IMR-90 (cell line): ENCODE measurements at regions of chr11 and their contacts with region 1.

Region 1: GRCh38 chr11:73307323-73308002 is 613 bp upstream of the ARHGEF17 start:
- DNase-seq: peak; percentile 98
- ATAC-seq: peak; percentile 60
- H3K4me3 ChIP-seq: peak overlapping the region; percentile 63
- H3K27ac ChIP-seq: peak overlapping the region; percentile 93
- H3K4me1 ChIP-seq: peaks cover 23% of the 10 kb centered on the region
- H3K27me3 ChIP-seq: no peaks in the 10 kb centered on the region
- CTCF ChIP-seq: peak; percentile 98
- POLR2A ChIP-seq: 0 out of 2 replicates have a peak, but pooled peaks have one; percentile 32
- RAD21 ChIP-seq: peak; percentile 97

Region 2: GRCh38 chr11:73257342-73258103 is 49.9 kb before region 1 on chr11:
- CTCF ChIA-PET with region 1: interaction called, 4 read pairs
- POLR2A ChIA-PET with region 1: interaction called, 11 read pairs
- dilution Hi-C with region 1: no loop called
- in situ Hi-C with region 1: no loop called
- intact Hi-C with region 1: no loop called
- DNase-seq: peak; percentile 91
- ATAC-seq: peak; percentile 93
- H3K4me3 ChIP-seq: no peak overlapping the region
- H3K27ac ChIP-seq: peak overlapping the region; percentile 92
- H3K4me1 ChIP-seq: peaks cover 14% of the 10 kb centered on the region
- H3K27me3 ChIP-seq: no peaks in the 10 kb centered on the region
- CTCF ChIP-seq: no peak
- POLR2A ChIP-seq: no peak
- RAD21 ChIP-seq: no peak

Region 3: DNA sequence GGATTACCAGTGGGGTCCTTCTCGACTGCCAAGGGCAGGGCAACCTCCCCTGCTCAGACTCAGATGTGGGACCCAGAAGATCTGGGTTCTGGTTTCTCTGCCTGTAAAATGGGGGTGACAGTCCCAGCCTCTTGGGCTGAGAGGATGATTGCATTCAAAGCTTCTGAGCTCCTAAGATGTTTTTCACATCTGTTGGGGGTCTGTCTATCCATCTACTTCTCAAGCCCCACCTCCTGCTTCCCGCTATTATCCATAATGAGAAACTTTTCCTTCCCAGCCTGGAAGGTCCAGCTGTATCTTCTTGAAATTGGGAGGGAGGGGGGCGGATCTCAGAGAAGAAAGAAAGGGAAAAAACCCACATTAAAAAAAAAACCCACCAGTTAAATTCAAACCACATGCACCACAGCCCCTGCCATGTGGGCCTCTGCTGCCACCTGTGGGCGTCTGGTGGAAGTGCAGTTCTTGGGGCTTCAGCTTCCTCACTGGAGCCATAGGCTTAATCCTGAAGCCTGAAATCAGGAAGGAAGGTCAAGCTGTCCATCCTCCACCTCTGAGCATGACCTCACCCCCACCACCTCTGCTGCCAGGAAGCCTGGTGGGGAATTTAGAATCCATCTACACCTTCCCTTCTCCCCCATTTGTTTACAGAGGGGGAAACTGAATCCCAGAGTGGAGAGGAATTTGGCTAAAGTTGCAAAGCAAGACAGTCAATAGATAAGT is 27.9 kb after region 1 on chr11:
- CTCF ChIA-PET with region 1: interaction called, 20 read pairs
- POLR2A ChIA-PET with region 1: interaction called, 10 read pairs
- dilution Hi-C with region 1: no loop called
- in situ Hi-C with region 1: no loop called
- intact Hi-C with region 1: loop called (anchors 1 kb)
- DNase-seq: peak; percentile 82
- ATAC-seq: peak; percentile 67
- H3K4me3 ChIP-seq: no peak overlapping the region
- H3K27ac ChIP-seq: peak overlapping the region; percentile 70
- H3K4me1 ChIP-seq: peaks cover 49% of the 10 kb centered on the region
- H3K27me3 ChIP-seq: no peaks in the 10 kb centered on the region
- CTCF ChIP-seq: peak; percentile 99
- POLR2A ChIP-seq: 0 out of 2 replicates have a peak, but pooled peaks have one; percentile 55
- RAD21 ChIP-seq: peak; percentile 99

Region 4: DNA sequence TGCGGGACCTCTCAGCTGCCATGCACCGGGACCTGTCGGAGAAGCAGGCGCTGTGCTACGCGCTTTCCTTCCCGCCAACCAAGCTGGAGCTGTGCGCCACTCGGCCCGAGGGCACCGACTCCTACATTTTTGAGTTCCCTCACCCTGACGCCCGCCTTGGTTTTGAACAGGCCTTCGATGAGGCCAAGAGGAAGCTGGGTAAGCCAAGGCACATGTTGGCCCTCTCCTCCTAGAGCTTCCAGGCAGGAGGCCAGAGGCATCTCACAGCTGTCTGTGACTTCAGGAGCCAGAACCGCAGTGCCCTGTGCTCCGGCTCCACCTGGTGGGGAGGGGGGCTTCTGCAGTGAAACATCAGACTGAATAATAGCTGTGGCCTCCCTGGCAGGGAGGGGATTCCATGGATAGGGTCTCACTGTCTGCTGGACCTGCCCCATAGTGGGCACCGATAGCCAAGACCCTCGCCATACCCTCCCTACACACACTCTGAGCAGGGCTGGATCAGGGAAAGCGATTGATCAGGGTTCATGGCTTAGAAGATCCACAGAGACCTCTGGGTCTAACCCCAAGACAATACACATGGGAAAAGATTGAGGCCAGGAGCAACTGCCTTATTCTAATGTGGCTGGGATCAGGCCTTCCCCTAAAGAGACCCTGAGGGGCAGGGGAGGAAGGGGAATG is 53.0 kb after region 1 on chr11:
- CTCF ChIA-PET with region 1: interaction called, 6 read pairs
- POLR2A ChIA-PET with region 1: no interaction called
- dilution Hi-C with region 1: no loop called
- in situ Hi-C with region 1: no loop called
- intact Hi-C with region 1: loop called (anchors 1 kb)
- DNase-seq: peak; percentile 49
- ATAC-seq: peak; percentile 36; the same call in 1 of the 2 replicates
- H3K4me3 ChIP-seq: no peak overlapping the region
- H3K27ac ChIP-seq: no peak overlapping the region
- H3K4me1 ChIP-seq: peaks cover 9% of the 10 kb centered on the region; the same call in 1 of the 2 replicates
- H3K27me3 ChIP-seq: no peaks in the 10 kb centered on the region
- CTCF ChIP-seq: peak; percentile 43
- POLR2A ChIP-seq: no peak
- RAD21 ChIP-seq: peak; percentile 48

Region 5: DNA sequence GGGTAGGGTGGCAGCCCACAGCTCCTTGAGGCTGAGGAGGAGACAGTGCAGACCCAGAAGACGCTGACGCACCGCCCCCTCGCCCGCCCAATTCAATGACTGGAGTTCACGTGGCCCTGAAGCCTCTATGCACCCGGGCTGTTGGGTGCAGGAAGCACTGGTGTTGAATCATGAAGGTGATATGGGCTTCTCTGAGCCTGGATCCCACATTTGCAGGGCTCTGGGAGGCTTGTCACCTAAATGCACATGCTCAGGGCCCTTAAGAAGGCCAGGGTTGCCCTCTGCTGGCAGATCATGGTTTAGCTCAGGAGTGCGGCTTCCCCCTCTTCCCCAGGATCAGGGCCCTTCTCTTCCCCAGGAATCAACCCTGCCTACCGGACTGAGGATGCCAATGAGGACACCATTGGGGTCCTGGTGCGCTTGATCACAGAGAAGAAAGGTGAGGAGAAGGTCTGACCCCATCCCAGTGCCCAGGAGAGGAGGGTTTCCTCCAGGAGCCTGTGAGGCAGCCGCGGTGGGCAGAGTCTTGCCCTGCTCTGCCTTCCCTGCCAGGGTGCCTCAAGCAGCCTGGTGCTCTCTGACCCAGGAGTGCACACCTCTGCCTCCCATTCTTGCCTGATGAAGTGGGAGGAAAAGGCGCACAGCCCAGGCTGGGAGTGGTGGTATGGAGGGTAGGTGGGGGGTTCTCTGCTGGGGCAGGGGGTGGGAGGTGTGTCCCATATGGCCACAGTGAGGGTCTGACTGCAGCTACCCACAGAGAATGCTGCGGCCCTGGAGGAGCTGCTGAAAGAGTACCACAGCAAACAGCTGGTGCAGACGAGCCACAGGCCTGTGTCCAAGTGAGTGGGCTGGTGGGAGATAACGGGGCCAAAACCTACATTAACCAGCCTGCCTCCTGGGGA is 86.3 kb after region 1 on chr11:
- CTCF ChIA-PET with region 1: interaction called, 5 read pairs
- POLR2A ChIA-PET with region 1: interaction called, 9 read pairs
- dilution Hi-C with region 1: no loop called
- in situ Hi-C with region 1: no loop called
- intact Hi-C with region 1: loop called (anchors 1 kb)
- DNase-seq: peak; percentile 82
- ATAC-seq: peak; percentile 95
- H3K4me3 ChIP-seq: no peak overlapping the region
- H3K27ac ChIP-seq: no peak overlapping the region
- H3K4me1 ChIP-seq: no peaks in the 10 kb centered on the region
- H3K27me3 ChIP-seq: no peaks in the 10 kb centered on the region
- CTCF ChIP-seq: peak; percentile 81
- POLR2A ChIP-seq: no peak
- RAD21 ChIP-seq: peak; percentile 82

Region 6: DNA sequence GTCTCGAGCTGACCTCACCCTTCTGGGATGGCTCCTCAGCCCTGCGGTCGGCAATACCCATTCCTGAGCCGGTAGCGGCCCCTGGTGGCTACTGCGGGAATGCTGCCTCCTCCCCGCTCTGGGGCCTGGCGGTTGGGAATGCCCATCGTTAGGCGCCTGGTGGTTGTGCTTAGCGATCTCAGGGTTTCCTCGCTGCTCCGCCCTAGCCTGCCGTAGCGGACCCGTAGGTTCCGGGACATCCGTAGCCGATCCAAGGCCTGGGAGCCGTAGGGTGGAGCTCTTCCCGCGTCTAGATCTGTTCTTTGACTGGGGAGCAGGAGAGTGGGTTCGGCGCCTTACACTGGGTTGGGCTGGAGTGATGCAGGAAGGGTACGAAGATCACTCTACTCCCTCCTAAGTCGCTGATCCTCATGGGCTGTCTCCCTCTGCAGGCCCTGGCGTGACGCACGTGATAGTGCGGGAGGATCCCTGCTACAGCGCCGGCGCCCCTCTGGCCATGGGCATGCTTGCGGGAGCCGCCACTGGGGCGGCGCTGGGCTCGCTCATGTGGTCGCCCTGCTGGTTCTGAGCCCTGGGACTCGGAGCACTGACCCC is 353.7 kb after region 1 on chr11:
- CTCF ChIA-PET with region 1: interaction called, 3 read pairs
- POLR2A ChIA-PET with region 1: interaction called, 3 read pairs
- dilution Hi-C with region 1: no loop called
- in situ Hi-C with region 1: no loop called
- intact Hi-C with region 1: loop called (anchors 2 kb)
- DNase-seq: peak; percentile 77
- ATAC-seq: peak; percentile 98
- H3K4me3 ChIP-seq: peak overlapping the region; percentile 25
- H3K27ac ChIP-seq: peak overlapping the region; percentile 12; the same call in 1 of the 2 replicates
- H3K4me1 ChIP-seq: peaks cover 3% of the 10 kb centered on the region; the same call in 1 of the 2 replicates
- H3K27me3 ChIP-seq: no peaks in the 10 kb centered on the region
- CTCF ChIP-seq: peak; percentile 99
- POLR2A ChIP-seq: peak; percentile 62
- RAD21 ChIP-seq: peak; percentile 100